ENCODE measurements at regions of chr9 and their contacts with region 1.

Region 1: GRCh38 chr9:7799234-7799943 is at the start of gene DMAC1:
- DNase-seq: peak; percentile 78
- H3K4me3 ChIP-seq: peak within 1 kb of the TSS; percentile 65 to 99 (median 84)
- H3K27ac ChIP-seq: peak within 1 kb of the TSS; percentile 60
- H3K4me1 ChIP-seq: peaks cover 6% of the 10 kb centered on the region
- H3K27me3 ChIP-seq: no peaks in the 10 kb centered on the region
- CTCF ChIP-seq: no peak
- POLR2A ChIP-seq: peak; percentile 20
- total RNA-seq, gene DMAC1: 44.0 and 49.6 TPM in 2 replicates

Region 2: DNA sequence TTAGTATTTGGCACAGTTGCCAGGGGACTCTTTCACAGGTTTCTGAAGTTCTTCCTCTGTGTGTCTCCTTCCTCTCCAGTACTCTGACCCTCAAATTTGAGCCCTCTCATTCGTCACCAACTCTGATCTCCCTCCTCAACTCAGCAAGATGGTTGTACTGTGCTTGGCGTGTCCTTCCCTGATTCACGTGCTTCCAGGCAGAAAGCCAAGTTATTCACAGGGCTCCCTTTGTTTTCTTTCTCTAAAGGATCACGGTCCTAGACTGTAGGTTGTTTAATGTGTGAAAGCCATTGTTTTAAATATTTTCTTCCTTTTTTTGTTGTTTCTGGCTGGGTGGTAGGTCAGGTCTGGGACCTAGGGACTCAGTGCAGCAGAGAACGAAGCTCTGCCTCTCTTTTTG is 142.8 kb before region 1 on chr9:
- CTCF ChIA-PET with region 1: no interaction called
- POLR2A ChIA-PET with region 1: no interaction called
- dilution Hi-C with region 1: no loop called
- intact Hi-C with region 1: loop called (anchors 2 kb)
- DNase-seq: peak; percentile 93
- H3K4me3 ChIP-seq: no peak overlapping the region
- H3K27ac ChIP-seq: peak overlapping the region; percentile 42
- H3K4me1 ChIP-seq: peaks cover 32% of the 10 kb centered on the region
- H3K27me3 ChIP-seq: no peaks in the 10 kb centered on the region
- CTCF ChIP-seq: no peak
- POLR2A ChIP-seq: no peak

Region 3: DNA sequence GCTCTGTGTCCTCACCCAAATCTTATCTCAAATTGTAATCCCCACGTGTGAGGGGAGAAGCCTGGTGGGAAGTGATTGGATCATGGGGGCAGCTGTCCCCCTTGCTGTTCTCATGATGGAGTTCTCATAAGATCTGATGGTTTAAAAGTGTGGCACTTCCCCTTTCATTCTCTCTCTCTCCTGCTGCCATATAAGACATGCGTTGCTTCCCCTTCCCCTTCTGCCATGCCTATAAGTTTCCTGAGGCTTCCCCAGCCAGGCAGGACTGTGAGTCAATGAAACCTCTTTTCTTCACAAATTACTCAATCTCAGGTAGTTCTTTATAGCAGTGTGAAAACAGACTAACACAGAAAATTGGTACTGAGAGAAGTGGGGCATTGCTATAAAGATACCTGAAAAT is 107.5 kb before region 1 on chr9:
- CTCF ChIA-PET with region 1: no interaction called
- POLR2A ChIA-PET with region 1: no interaction called
- dilution Hi-C with region 1: no loop called
- intact Hi-C with region 1: no loop called
- DNase-seq: no peak
- H3K4me3 ChIP-seq: no peak overlapping the region
- H3K27ac ChIP-seq: no peak overlapping the region
- H3K4me1 ChIP-seq: no peaks in the 10 kb centered on the region
- H3K27me3 ChIP-seq: no peaks in the 10 kb centered on the region
- CTCF ChIP-seq: no peak
- POLR2A ChIP-seq: no peak

Region 4: GRCh38 chr9:7816021-7816420 is 16.6 kb after region 1 on chr9:
- CTCF ChIA-PET with region 1: no interaction called
- POLR2A ChIA-PET with region 1: no interaction called
- dilution Hi-C with region 1: no loop called
- intact Hi-C with region 1: no loop called
- DNase-seq: peak; percentile 27
- H3K4me3 ChIP-seq: no peak overlapping the region
- H3K27ac ChIP-seq: no peak overlapping the region
- H3K4me1 ChIP-seq: no peaks in the 10 kb centered on the region
- H3K27me3 ChIP-seq: peaks cover 0 to 2% of the 10 kb centered on the region in 2 experiments
- CTCF ChIP-seq: no peak
- POLR2A ChIP-seq: no peak

Region 5: GRCh38 chr9:8733131-8733954 is 934.0 kb after region 1 on chr9:
- CTCF ChIA-PET with region 1: no interaction called
- POLR2A ChIA-PET with region 1: no interaction called
- dilution Hi-C with region 1: no loop called
- intact Hi-C with region 1: loop called (anchors 10 kb)
- DNase-seq: peak; percentile 43
- H3K4me3 ChIP-seq: peak overlapping the region in 1 of 3 experiments; percentile 38
- H3K27ac ChIP-seq: no peak overlapping the region
- H3K4me1 ChIP-seq: peaks cover 9% of the 10 kb centered on the region
- H3K27me3 ChIP-seq: no peaks in the 10 kb centered on the region
- CTCF ChIP-seq: no peak
- POLR2A ChIP-seq: no peak